ENCODE measurements at regions of chr5 and their contacts with region 1.

Region 1: DNA sequence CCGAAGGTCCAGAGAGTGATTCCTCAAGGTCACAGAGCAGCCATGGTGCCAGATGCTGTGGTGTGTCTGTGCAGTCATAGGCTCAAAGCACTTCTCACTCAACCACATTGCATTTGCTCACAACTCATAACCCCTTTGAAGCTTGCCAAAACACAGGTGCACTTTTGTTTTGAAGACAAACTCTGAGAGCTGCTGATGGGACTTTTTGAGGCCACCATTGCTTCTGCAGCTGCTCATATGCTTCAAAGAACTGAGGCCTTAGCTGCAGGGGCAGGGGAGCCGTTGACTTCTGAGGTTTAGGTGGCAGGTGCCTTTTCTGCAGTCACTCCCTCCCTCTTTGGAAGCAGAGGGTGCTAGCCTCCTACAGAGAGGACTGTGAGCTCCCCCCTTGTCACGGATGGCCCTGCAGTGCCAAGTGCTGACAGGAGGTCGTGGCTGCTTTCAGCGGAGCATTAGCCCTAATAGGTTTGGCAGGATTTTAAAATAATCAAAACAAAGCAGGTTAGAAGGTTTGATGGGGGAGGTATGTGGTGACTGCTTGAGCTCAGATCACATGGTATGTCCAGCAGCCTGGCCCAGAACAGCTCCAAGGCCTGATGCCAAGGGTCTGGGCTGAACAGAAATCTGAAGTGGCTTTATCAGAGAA is 232.1 kb downstream of the MAN2A1 start:
- DNase-seq: peak; percentile 41
- ATAC-seq: peak; percentile 71
- H3K4me3 Mint-ChIP-seq: no peak overlapping the region
- H3K27ac Mint-ChIP-seq: peak overlapping the region; percentile 62
- H3K4me1 Mint-ChIP-seq: peaks cover 16% of the 10 kb centered on the region
- H3K27me3 Mint-ChIP-seq: no peaks in the 10 kb centered on the region

Region 2: GRCh38 chr5:109898269-109899162 is 23.3 kb before region 1 on chr5:
- CTCF ChIA-PET with region 1: no interaction called
- POLR2A ChIA-PET with region 1: no interaction called
- DNase-seq: no peak
- ATAC-seq: no peak
- H3K4me3 Mint-ChIP-seq: no peak overlapping the region
- H3K27ac Mint-ChIP-seq: no peak overlapping the region
- H3K4me1 Mint-ChIP-seq: no peaks in the 10 kb centered on the region
- H3K27me3 Mint-ChIP-seq: no peaks in the 10 kb centered on the region

Region 3: DNA sequence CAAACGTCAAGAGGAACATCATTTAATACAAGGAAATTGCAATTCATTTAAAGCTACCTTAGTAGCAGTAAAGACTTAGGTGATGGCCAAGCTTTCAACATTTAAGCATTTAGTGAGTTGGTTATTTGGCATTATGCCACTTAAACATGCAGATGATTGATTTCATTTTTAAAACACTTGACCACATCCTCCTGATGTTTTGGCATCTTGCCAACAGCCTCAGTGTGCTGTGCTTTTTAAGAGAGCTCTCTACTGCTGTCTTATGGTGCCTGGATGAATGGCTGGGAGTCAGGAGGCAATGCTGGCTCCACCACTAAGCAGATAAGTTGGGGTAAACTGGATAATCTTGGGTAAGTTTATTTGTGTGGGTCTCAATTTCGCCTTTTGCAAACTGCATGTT is 132.4 kb after region 1 on chr5:
- CTCF ChIA-PET with region 1: interaction called, 11 read pairs
- POLR2A ChIA-PET with region 1: no interaction called
- DNase-seq: peak; percentile 87
- ATAC-seq: peak; percentile 92
- H3K4me3 Mint-ChIP-seq: peak overlapping the region; percentile 29
- H3K27ac Mint-ChIP-seq: peak overlapping the region; percentile 85
- H3K4me1 Mint-ChIP-seq: peaks cover 26% of the 10 kb centered on the region
- H3K27me3 Mint-ChIP-seq: no peaks in the 10 kb centered on the region

Measured in activated CD8-positive, alpha-beta T cell treated with anti-CD3 and anti-CD28 coated beads, Interleukin-2, amount 10 ng/mL, durations not matched to agents 7 days and 5 days (primary cell).